ENCODE measurements at regions of chr10 and their contacts with region 1.

Region 1: DNA sequence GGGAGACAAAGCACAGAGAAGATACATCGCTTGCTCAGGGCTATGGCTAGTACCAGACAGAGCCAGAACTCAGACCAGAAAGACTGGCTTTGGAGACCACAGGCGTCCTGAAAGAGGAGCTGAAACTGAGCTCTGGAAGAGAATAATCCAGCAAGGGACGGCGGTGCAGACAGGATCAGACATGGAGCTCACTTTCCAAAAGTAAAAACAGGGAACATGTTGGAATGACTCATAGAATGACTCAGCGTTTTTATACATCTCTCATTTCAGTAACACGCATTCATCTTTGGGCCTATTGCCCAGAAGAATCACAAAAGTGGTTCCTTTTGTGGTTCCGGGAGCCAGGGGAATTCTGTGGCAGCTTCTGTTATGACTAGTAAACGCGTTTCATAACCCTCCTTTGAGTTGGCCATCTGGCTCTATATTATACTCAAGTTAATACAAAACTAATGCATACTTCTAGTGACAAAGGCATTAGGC is 37.2 kb downstream of the PLEKHS1 start:
- DNase-seq: peak in 2 of 5 donors; percentile 35 to 36
- ATAC-seq: peak in 3 of 4 donors; percentile 20 to 88 (median 39)
- H3K4me3 ChIP-seq: no peak overlapping the region
- H3K27ac ChIP-seq: peak overlapping the region in 2 of 12 donors; percentile 8 to 35
- H3K4me1 ChIP-seq: peaks cover 0 to 6% (median 0%) of the 10 kb centered on the region in 12 donors
- H3K27me3 ChIP-seq: peaks cover 0 to 7% (median 0%) of the 10 kb centered on the region in 9 donors
- CTCF ChIP-seq: no peak
- POLR2A ChIP-seq: no peak

Region 2: DNA sequence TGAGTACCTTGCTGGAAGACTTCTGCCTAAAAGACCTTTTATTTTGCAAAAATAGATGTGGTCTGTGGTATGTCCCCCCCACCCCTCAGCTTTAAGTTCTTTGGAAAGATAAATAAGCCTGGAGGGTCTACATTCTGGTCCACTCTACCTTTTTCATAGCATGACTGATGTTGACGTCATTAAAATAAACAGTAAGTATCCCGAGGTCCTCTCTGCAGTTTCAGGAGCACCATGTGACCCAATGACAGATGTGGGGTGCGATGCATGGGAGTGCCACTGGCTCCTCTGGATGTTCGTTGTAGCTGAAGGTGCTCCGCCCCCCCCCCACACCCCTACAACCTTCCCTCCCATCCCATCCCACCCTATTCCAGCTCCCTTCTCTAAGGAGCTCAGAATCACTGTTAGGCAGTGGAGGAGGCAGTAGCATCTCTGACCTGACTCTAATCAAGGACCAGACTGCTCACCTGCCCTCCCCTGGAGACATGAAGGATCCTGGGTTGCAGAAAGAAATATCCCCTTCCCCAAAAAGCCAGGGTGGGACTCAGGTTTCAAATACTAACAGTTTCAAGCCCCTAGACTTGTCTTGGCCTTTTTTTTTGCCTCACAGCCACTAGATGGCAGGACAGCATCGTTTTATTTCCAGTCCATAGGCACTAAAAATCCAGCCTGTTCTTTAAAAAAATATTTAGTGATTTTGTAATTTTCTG is 83.9 kb before region 1 on chr10:
- intact Hi-C with region 1: loop called in 1 of 10 experiments (anchors 10 kb)
- DNase-seq: no peak
- ATAC-seq: peak in 1 of 4 donors; percentile 46
- H3K4me3 ChIP-seq: no peak overlapping the region
- H3K27ac ChIP-seq: no peak overlapping the region
- H3K4me1 ChIP-seq: peaks cover 0 to 21% (median 0%) of the 10 kb centered on the region in 12 donors
- H3K27me3 ChIP-seq: no peaks in the 10 kb centered on the region
- CTCF ChIP-seq: peak; percentile 36 to 74 (median 58)
- POLR2A ChIP-seq: no peak

Region 3: DNA sequence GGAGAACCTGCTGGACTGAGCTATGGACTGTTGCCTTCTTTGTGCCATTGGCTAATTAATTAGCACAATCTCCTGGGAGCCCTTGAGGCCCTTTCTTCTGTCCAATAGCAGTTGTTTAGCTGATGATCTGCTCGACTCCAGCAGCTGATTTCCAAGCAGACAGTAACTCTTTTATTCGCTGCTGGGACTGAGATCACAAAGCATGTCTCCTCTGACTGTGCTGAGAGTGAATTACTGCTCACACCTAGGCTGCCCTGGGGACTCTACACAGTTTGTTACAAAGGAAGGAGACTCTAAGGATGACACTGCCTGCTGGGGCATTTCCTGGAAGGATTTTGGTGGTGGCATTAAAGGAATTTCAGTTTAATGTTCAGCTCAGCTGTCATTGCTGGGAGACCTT is 77.5 kb before region 1 on chr10:
- intact Hi-C with region 1: loop called in 2 of 10 experiments (anchors 10 kb)
- DNase-seq: no peak
- ATAC-seq: no peak
- H3K4me3 ChIP-seq: no peak overlapping the region
- H3K27ac ChIP-seq: no peak overlapping the region
- H3K4me1 ChIP-seq: peaks cover 0 to 36% (median 8%) of the 10 kb centered on the region in 12 donors
- H3K27me3 ChIP-seq: no peaks in the 10 kb centered on the region
- CTCF ChIP-seq: no peak
- POLR2A ChIP-seq: no peak

Region 4: GRCh38 chr10:115129752-115130151 is 1341.1 kb after region 1 on chr10:
- intact Hi-C with region 1: loop called in 1 of 10 experiments (anchors 10 kb)
- DNase-seq: no peak
- ATAC-seq: peak in 1 of 4 donors; percentile 46
- H3K4me3 ChIP-seq: no peak overlapping the region
- H3K27ac ChIP-seq: no peak overlapping the region
- H3K4me1 ChIP-seq: no peaks in the 10 kb centered on the region
- H3K27me3 ChIP-seq: no peaks in the 10 kb centered on the region
- CTCF ChIP-seq: peak; percentile 10 to 64 (median 38)
- POLR2A ChIP-seq: no peak

Measured in heart left ventricle (tissue), 16 donors.